Activated CD8-positive, alpha-beta T cell treated with anti-CD3 and anti-CD28 coated beads, Interleukin-2, amount 10 ng/mL, durations not matched to agents 7 days and 5 days (primary cell): ENCODE measurements at regions of chr12 and their contacts with region 1.

Region 1: DNA sequence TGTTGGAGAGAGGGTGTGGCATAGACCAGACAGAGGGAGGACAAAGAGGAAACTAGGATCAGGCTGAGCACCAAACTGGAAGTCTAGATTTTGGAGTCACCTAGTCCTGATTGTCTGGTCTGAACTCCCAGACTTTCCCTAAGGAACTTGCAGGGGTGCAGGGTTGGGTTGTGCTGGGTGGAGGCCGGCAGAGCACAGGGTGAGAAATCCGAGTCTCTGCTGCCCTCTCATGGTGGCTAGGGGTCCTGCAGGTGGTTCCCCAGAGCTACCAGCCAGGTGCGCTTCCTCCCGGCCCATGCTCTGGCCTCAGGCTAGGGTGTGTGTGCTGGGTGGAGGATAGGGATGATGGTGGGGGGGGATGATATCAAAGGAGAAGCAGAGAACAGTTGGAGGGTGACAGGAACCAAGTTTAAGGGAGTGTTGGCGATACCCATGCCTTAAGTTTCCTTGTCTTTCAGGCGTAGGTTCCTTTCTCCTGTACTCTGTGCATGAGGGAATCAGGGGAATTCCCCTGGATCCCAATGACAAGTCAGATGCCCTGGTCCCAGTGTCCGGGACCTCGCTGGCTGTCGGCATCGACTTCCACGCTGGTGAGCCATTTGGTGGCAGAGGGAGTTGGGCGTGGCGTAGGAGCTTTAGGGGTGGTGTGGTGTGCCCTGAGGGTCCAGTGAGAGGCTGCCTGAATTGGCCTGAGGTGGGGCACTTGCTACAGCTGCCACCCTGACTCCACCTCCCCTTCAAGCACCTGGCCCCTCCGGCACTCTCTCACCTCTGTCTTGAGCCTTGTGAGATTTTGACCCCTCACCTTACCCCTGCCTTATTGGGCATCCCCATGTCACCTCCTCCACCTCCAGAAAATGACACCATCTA is 33.4 kb upstream of the NXPH4 start:
- DNase-seq: peak; percentile 87
- ATAC-seq: peak; percentile 96
- H3K4me3 Mint-ChIP-seq: no peak overlapping the region
- H3K27ac Mint-ChIP-seq: no peak overlapping the region
- H3K4me1 Mint-ChIP-seq: peaks cover 5% of the 10 kb centered on the region
- H3K27me3 Mint-ChIP-seq: no peaks in the 10 kb centered on the region

Region 2: DNA sequence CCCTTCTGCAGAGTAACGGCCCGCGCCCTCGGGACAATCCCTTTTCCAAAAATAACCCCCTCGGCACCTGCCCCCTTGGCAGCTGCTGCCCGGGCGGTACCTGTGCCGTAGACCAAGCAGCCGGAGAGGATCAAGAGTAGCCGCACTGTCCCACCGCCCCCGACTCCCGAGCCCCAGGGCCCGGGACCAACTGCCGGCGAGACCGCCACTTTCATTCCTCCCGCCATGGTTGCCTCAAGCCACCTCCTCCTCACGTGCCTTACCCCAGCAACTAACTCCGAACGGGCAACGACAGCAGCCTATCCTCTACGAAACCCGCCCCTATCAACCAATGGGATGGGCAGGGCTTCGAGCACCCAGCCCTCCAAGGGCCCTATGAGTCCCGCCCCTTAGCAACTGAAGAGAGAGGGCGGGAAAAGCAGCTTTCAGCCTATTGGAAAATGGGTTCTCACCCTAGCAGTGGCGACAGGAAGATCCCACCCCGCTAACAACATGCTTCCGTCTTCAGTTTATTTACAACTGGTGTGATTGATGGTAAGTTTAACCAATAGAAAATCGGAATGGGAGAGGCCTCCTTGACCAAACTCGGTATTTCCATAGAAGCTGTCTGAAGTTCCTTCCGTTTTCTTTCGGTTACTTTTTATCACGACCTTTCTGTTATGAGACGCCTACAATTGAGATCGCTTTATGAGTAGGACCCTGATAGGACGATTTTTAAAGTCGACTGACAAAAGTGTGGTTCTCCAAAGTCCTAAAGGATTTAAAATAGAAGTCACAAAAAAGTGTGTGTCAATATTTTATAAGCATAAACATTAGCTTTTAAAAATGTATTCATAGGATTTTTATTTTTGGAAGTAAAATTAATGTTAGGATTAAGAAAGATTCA is 104.4 kb before region 1 on chr12 and contains the start of gene NEMP1:
- CTCF ChIA-PET with region 1: interaction called, 10 read pairs
- POLR2A ChIA-PET with region 1: no interaction called
- DNase-seq: peak; percentile 99
- ATAC-seq: peak; percentile 97
- H3K4me3 Mint-ChIP-seq: peak within 1 kb of the TSS; percentile 99
- H3K27ac Mint-ChIP-seq: peak within 1 kb of the TSS; percentile 98
- H3K4me1 Mint-ChIP-seq: peaks cover 29% of the 10 kb centered on the region
- H3K27me3 Mint-ChIP-seq: no peaks in the 10 kb centered on the region
- total RNA-seq, gene NEMP1: 56.4 to 56.9 TPM

Region 3: DNA sequence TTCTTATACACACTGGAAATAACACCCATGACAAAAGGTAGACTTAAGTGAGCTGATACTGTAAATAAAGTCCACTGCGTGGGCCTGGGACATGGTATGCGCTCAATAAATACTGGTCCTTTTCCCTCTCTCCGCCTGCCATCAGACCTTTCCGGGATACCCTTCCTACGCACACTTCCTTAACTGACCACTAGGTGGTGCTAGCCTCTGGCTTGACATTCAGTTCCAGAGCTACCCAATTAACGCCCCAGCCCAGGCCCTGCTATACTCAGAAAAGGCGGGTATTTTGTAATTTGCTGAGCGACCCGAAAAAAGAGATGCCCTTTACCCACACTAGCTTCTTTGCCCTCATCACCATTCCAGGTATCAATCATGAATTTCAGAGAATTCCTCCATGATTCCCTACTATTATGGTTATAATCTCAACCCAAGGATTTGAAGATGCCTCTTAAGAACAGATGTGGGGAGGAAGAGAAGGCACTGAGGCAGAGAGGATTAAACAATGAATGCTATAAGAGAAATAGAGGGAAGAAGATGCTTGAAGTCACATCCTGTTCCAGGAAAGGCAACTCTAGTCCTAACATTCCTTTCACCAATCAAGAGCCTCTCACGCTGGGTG is 58.8 kb before region 1 on chr12:
- CTCF ChIA-PET with region 1: interaction called, 178 read pairs
- POLR2A ChIA-PET with region 1: no interaction called
- DNase-seq: peak; percentile 85
- ATAC-seq: peak; percentile 65
- H3K4me3 Mint-ChIP-seq: no peak overlapping the region
- H3K27ac Mint-ChIP-seq: no peak overlapping the region
- H3K4me1 Mint-ChIP-seq: peaks cover 5% of the 10 kb centered on the region
- H3K27me3 Mint-ChIP-seq: peaks cover 29% of the 10 kb centered on the region